ENCODE measurements at regions of chr22 and their contacts with region 1.

Region 1: GRCh38 chr22:22959147-22959827 is 71.7 kb downstream of the IGLL5 start:
- DNase-seq: peak; percentile 90
- ATAC-seq: peak; percentile 75
- H3K4me3 Mint-ChIP-seq: no peak overlapping the region
- H3K27ac Mint-ChIP-seq: no peak overlapping the region
- H3K4me1 Mint-ChIP-seq: no peaks in the 10 kb centered on the region
- H3K27me3 Mint-ChIP-seq: peaks cover 12% of the 10 kb centered on the region
- CTCF ChIP-seq: peak; percentile 96

Region 2: DNA sequence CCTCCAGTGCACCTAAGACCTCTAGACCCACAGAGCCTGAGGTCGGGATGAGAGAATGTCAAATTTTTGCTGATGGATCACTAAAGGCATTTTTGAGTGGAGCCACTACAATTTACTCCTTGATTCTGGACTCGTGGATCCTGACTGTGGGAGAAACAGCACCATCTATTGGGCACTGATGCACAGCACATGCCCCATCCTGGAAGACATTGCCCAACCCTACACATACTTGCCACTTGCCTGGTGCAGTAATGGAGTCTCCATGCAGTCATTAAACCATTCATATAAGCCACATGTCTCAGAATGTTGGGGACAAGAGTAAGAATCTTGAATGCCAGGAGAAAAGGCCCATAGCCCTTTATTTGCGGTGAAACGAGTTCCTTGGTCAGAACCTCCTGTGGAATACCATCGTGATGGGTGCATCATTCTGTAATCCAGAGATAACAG is 211.0 kb before region 1 on chr22:
- CTCF ChIA-PET with region 1: interaction called, 35 read pairs
- POLR2A ChIA-PET with region 1: no interaction called
- intact Hi-C with region 1: no loop called
- DNase-seq: peak; percentile 70
- ATAC-seq: peak; percentile 87
- H3K4me3 Mint-ChIP-seq: no peak overlapping the region
- H3K27ac Mint-ChIP-seq: no peak overlapping the region
- H3K4me1 Mint-ChIP-seq: peaks cover 19% of the 10 kb centered on the region
- H3K27me3 Mint-ChIP-seq: no peaks in the 10 kb centered on the region
- CTCF ChIP-seq: peak; percentile 84

Region 3: GRCh38 chr22:22802339-22802970 is 156.8 kb before region 1 on chr22:
- CTCF ChIA-PET with region 1: interaction called, 25 read pairs
- POLR2A ChIA-PET with region 1: no interaction called
- intact Hi-C with region 1: loop called (anchors 5 kb)
- DNase-seq: peak; percentile 66
- ATAC-seq: peak; percentile 64
- H3K4me3 Mint-ChIP-seq: no peak overlapping the region
- H3K27ac Mint-ChIP-seq: no peak overlapping the region
- H3K4me1 Mint-ChIP-seq: peaks cover 28% of the 10 kb centered on the region
- H3K27me3 Mint-ChIP-seq: no peaks in the 10 kb centered on the region
- CTCF ChIP-seq: peak; percentile 80

Region 4: GRCh38 chr22:22877523-22878210 is 81.6 kb before region 1 on chr22:
- CTCF ChIA-PET with region 1: interaction called, 61 read pairs
- POLR2A ChIA-PET with region 1: no interaction called
- intact Hi-C with region 1: no loop called
- DNase-seq: peak; percentile 77
- ATAC-seq: no peak
- H3K4me3 Mint-ChIP-seq: no peak overlapping the region
- H3K27ac Mint-ChIP-seq: no peak overlapping the region
- H3K4me1 Mint-ChIP-seq: peaks cover 2% of the 10 kb centered on the region
- H3K27me3 Mint-ChIP-seq: no peaks in the 10 kb centered on the region
- CTCF ChIP-seq: peak; percentile 82

Region 5: DNA sequence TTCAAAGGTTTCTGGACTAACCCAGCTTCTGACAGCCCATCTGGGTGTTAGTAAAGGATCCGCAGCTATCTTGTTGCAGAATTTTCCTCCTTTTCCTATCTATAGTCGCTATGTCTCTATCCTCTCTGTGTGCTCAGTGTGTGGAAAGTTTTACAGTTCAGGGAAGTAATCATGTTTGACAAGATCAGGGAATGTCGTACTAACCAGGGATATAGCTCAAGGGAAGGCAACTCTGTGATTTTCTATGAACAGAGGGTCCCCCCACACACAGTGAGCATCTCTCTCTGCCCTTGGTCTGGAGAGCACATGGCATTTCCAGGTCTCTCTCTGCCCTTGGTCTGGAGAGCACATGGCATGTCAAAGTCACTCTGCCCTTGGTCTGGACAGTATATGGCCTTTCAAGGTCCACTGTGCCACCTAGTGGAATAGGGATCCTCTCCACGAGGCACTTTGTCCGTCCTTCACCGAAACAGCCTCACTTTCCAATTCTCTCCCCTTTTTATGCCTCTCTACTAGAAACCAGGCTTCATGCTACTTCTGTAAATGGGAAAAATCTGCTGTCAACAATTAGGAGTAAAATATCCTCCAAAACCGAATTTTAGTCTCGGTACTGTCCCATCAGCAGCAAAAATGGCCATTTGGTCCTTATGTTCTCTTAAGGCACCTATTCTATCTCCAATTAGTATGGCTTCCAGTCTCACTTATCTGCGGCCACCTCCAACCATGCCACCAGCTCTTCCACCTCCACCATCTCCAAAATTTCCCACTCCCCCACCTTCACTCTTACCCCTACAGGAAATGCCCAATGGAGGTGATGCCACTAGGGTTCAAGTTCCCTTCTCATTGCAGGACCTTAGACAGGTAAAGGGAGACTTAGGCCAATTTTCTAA is 17.0 kb after region 1 on chr22:
- CTCF ChIA-PET with region 1: interaction called, 96 read pairs
- POLR2A ChIA-PET with region 1: no interaction called
- intact Hi-C with region 1: no loop called
- DNase-seq: no peak
- ATAC-seq: no peak
- H3K4me3 Mint-ChIP-seq: no peak overlapping the region
- H3K27ac Mint-ChIP-seq: no peak overlapping the region
- H3K4me1 Mint-ChIP-seq: no peaks in the 10 kb centered on the region
- H3K27me3 Mint-ChIP-seq: peaks cover 11% of the 10 kb centered on the region
- CTCF ChIP-seq: no peak

Region 6: GRCh38 chr22:23119494-23120414 is 160.5 kb after region 1 on chr22:
- CTCF ChIA-PET with region 1: interaction called, 106 read pairs
- POLR2A ChIA-PET with region 1: interaction called, 3 read pairs
- intact Hi-C with region 1: no loop called
- DNase-seq: peak; percentile 76
- ATAC-seq: peak; percentile 93
- H3K4me3 Mint-ChIP-seq: peak overlapping the region; percentile 22
- H3K27ac Mint-ChIP-seq: peak overlapping the region; percentile 78
- H3K4me1 Mint-ChIP-seq: peaks cover 11% of the 10 kb centered on the region
- H3K27me3 Mint-ChIP-seq: no peaks in the 10 kb centered on the region
- CTCF ChIP-seq: no peak

Region 7: GRCh38 chr22:23281406-23282088 is 322.3 kb after region 1 on chr22:
- CTCF ChIA-PET with region 1: interaction called, 7 read pairs
- POLR2A ChIA-PET with region 1: no interaction called
- intact Hi-C with region 1: loop called (anchors 10 kb)
- DNase-seq: peak; percentile 89
- ATAC-seq: peak; percentile 86
- H3K4me3 Mint-ChIP-seq: no peak overlapping the region
- H3K27ac Mint-ChIP-seq: no peak overlapping the region
- H3K4me1 Mint-ChIP-seq: peaks cover 32% of the 10 kb centered on the region
- H3K27me3 Mint-ChIP-seq: no peaks in the 10 kb centered on the region
- CTCF ChIP-seq: peak; percentile 94

Measured in activated CD8-positive, alpha-beta T cell treated with anti-CD3 and anti-CD28 coated beads for 36 hours (primary cell).